ENCODE measurements at regions of chr6 and their contacts with region 1.

Region 1: GRCh38 chr6:35731736-35732532 is 4.9 kb upstream of the ARMC12 start:
- DNase-seq: peak; percentile 45
- H3K4me3 ChIP-seq: peak overlapping the region; percentile 73
- H3K27ac ChIP-seq: peak overlapping the region; percentile 91
- H3K27me3 ChIP-seq: no peaks in the 10 kb centered on the region
- CTCF ChIP-seq: no peak

Region 2: DNA sequence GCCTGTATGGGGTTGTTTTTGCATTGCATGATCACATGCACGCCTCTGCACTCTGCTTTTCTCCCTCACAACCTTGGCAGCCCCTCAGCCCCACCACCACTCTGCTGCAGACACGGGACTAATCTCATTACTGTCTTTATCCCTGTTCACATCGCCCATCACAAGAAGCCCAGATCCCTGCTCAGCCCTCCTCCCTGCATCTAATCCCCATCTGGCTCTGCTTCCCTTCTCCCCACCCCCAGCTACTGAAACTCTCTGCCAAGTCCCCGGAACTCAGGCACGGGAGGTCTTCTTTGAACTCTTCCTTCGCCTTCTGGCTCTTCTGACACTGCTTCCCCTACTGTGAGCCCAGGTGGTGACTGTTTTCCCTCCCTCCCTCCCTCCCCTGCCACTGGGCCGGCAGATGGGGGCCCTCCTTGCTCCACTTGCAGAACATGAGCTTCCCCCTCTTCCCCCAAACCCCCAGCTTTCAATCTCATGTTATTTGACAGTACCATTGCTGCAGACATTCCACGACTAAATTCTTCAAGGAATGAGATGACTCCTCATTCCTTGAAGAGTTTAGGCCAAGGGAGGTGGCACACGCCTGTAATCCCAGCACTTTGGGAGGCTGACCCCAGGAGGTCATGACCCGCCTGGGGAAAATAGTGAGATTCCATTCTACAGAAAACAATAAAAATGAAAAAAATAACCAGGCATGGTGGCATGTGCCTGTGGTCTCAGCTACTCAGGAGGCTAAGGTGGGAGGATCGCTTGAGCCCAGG is 197.3 kb before region 1 on chr6:
- CTCF ChIA-PET with region 1: interaction called, 16 read pairs
- POLR2A ChIA-PET with region 1: no interaction called
- DNase-seq: no peak
- H3K4me3 ChIP-seq: no peak overlapping the region
- H3K27ac ChIP-seq: no peak overlapping the region
- H3K27me3 ChIP-seq: peaks cover 20% of the 10 kb centered on the region
- CTCF ChIP-seq: no peak

Region 3: DNA sequence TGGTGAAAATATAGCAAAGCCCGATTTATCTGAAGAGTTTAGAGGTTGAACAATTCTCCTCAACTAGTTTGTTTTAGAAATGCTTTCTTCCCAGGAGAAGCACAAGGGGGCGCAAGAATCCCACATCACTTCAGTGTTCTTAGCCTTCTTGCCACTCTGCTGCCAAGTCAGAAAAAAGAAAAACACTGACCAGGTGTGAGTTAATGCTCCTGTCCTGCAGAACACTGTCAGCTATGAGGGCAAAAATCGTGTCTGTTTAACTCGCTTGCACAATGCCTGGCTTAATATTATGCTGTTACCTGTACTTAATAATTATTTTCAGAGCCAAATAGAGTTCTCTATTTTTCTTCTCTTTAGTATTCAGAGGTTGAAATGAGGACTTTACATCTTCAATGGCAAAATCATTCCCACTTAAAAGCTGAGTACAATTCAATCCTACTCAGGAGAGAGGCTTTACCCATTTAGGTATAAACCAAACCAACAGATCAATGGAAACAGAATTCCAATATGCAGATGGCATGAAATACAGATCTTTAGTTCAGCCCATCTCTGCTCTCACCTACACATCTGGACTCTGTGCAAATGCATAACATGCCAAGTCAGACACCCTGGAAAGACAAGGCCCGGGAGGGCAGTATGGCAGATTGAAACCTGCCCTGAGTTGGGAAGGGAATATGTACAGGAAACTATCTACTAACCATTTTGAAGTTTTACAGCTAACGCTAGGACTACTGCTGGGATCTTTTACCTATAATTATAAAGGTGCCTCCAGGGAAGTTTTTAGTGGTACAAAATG is 147.8 kb before region 1 on chr6:
- CTCF ChIA-PET with region 1: interaction called, 126 read pairs
- POLR2A ChIA-PET with region 1: interaction called, 3 read pairs
- DNase-seq: peak; percentile 53
- H3K4me3 ChIP-seq: no peak overlapping the region
- H3K27ac ChIP-seq: no peak overlapping the region
- H3K27me3 ChIP-seq: no peaks in the 10 kb centered on the region
- CTCF ChIP-seq: peak; percentile 88

Region 4: DNA sequence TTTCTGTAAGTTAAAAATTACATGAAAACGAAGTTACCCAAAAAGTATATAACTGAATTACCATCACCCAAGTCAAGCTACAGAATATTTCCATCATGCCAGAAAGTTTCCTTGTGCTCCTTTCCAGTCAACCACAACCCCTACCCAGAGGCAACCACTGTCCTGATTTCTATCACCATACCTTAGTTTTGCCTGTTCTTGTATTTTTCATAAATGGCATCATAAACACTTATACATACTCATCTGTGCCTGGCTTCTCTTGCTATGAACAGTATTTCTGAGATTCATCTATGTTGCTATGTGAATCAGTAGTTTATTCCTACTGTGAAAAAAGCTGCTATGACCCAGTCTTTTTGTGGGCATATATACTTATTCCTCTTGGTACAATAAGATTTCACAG is 50.6 kb before region 1 on chr6:
- CTCF ChIA-PET with region 1: interaction called, 26 read pairs
- POLR2A ChIA-PET with region 1: no interaction called
- DNase-seq: no peak
- H3K4me3 ChIP-seq: no peak overlapping the region
- H3K27ac ChIP-seq: no peak overlapping the region
- H3K27me3 ChIP-seq: no peaks in the 10 kb centered on the region
- CTCF ChIP-seq: no peak

Region 5: DNA sequence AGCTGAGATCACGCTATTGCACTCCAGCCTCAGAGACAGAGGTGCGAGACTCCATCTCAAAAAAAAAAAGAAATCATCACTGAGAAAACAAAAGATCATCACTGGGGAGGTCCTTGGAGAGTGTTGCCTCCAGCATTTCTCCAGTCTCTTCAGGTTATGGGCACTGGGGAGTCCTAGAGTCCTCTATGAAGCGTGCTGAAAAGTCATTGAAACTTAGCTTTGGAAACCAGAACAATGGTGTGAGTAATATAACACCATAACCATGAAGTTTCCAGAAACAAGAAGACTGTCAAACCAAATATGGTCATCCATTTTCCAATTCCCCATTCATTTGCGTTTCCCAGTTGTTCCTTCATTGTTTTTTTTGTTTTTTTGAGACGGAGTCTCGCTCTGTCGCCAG is 18.6 kb after region 1 on chr6:
- CTCF ChIA-PET with region 1: interaction called, 10 read pairs
- POLR2A ChIA-PET with region 1: no interaction called
- DNase-seq: no peak
- H3K4me3 ChIP-seq: no peak overlapping the region
- H3K27ac ChIP-seq: no peak overlapping the region
- H3K27me3 ChIP-seq: peaks cover 11% of the 10 kb centered on the region
- CTCF ChIP-seq: no peak